Posterior cingulate gyrus (tissue), 11 donors: ENCODE measurements at regions of chr18 and their contacts with region 1.

Region 1: DNA sequence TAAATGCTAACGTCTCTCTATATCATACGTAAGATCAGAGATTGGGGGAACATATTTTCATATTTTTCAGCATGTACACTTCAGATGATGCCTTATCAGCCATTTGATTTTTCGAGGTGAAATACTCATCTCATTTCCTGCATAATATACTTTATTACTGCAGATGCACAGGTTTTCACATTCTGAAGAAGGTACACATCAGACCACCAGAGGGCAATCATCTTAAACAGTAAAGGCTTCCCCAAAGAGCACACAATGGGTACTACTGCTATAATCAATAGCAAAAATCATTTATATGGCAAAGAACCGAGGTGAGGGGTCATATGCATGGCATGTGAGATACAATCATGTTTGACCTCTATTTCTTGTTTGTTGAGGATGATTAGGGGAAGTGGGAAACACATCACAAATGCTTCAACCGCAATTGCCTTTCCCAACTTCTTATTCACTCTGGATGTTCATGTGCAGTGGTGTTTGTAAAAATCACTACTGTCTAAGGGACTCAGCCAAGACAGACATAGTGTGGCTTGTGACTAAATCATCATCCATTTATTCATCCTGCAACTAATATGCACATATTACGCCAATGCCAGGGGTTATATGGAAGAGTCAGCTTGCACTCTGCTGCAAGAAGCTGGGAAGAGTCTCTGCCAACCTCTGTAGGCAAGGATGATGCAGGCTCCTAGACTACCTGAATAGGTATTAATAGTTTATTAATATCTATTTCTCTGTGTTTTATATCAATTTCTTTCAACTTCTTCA is 118.7 kb downstream of the EPB41L3 start:
- DNase-seq: no peak

Region 2: DNA sequence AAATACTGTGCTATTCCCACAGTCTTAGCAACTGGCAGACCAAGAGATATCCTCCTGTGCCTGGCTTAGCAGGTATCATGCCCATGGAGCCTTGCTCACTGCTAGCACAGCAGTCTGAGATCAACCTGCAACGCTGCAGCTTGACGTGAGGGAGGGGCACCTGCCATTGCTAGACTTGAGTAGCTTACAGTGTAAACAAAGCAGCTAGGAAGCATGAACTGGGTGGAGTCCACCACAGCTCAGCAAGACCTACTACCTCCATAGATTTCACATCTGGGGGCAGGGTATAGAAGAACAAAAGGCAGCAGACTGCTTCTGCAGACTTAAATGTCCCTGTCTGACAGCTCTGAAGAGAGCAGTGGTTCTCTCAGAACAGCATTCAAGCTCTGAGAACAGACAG is 302.8 kb before region 1 on chr18:
- intact Hi-C with region 1: no loop called
- DNase-seq: no peak

Region 3: DNA sequence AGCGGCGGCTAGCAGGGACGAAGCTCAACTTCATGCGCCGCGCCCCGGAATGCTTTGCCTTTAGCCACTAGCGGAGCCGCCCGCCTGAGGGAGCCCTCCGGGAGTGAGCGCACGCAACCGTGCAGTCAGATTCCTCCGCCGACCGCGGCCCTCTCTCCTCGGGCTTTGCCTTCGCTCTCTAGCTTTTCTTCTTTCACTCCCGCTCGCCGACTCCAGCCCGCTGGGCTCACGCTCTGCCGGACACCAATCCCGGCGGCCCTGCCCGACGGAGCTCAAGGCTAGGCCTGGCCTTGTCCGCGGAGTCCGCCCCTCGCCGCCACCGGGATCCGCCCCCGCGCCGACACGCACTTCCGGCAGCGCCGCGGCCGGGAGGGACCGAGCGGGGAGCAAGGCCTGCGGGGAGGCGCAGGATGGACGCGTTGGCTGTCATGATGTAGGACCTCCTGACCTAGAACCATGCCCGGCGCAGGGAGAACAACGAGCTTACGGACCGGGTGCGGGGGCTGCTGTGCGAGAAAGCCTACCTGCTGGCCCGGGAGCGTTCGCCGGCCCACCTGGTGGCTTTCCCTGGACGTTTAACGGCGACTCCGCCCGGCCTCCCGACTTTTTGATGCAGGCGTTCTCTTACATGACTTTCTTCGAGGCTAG is 187.2 kb before region 1 on chr18:
- intact Hi-C with region 1: loop called (anchors 5 kb)
- DNase-seq: peak; percentile 81 to 98 (median 88)

Region 4: DNA sequence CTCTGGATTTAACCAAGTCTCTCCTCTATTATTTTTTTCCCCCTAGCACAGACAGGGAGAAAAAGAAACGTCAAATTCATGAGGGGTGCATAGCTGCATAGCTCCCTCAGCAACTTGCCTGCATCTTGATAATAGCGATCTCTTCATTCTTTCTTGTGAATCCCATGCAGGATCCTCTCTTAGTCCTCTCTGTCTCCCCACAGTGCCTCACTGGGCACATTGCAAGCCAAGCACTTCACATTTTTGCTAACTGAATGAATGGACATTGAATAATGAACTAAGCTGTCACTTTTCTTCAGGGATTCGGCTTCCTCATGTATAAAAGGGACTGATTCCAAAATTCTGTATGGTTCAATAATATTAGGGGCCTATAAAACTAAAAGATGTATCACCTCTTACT is 121.6 kb after region 1 on chr18:
- intact Hi-C with region 1: loop called (anchors 5 kb)
- DNase-seq: peak in 7 of 10 donors; percentile 19 to 91 (median 35)